ENCODE measurements at regions of chr13 and their contacts with region 1.

Region 1: GRCh38 chr13:28819735-28820098 is 422 bp upstream of the MTUS2 start:
- DNase-seq: peak in 5 of 7 donors; percentile 23 to 60 (median 46)
- H3K4me3 ChIP-seq: peak overlapping the region in 1 of 4 donors; percentile 41
- H3K27ac ChIP-seq: no peak overlapping the region
- H3K4me1 ChIP-seq: peaks cover 0 to 5% of the 10 kb centered on the region in 2 donors
- H3K27me3 ChIP-seq: peaks cover 31% of the 10 kb centered on the region
- CTCF ChIP-seq: peak in 2 of 6 experiments; percentile 14 to 43
- POLR2A ChIP-seq: no peak

Region 2: DNA sequence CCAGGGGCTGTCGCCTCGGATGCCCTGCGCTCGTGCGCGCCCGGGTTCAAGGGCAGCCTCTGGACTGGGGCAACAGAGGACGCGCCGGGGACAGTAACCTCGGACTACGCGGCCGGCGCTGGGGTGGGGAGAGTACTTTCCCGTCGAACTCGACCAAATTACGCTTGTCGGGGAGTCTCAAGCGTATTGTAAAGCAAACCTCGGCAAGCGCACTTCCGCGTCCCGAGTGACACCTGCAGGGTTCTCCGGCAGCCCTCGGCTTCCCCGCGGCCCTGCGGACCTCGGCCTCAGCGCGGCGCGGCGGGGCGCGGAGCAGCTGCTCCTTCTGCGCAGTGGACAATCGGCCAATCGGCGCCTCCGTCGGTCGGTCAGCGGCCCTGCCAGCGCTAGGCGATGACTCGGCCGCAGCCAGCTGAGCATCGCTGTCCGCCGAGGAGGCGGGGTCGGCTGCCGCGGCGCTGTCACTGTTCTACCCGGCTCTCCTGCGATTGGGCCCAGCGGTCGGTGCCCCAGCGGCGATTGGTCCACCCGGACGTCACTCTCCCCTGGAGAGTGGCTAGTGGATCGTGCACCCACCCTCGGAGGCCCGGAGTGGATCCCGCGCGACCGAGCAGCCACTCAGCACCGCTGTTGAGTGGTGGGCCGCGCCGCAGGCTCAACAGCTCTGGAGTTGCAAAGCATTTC is 101.0 kb before region 1 on chr13 and contains the start of gene SLC46A3:
- intact Hi-C with region 1: no loop called
- DNase-seq: peak; percentile 99 to 100 (median 99)
- H3K4me3 ChIP-seq: peak within 1 kb of the TSS in 3 of 4 donors; percentile 20 to 93 (median 49)
- H3K27ac ChIP-seq: peak within 1 kb of the TSS; percentile 77 to 100 (median 97)
- H3K4me1 ChIP-seq: peaks cover 7 to 28% of the 10 kb centered on the region in 2 donors
- H3K27me3 ChIP-seq: no peaks in the 10 kb centered on the region
- CTCF ChIP-seq: peak in 2 of 6 experiments; percentile 19 to 28
- POLR2A ChIP-seq: peak; percentile 79 to 90
- total RNA-seq, gene SLC46A3: 13.9 to 87.4 (median 32.9) TPM

Region 3: GRCh38 chr13:29328501-29328900 is 508.8 kb after region 1 on chr13:
- intact Hi-C with region 1: no loop called
- DNase-seq: no peak
- H3K4me3 ChIP-seq: no peak overlapping the region
- H3K27ac ChIP-seq: no peak overlapping the region
- H3K4me1 ChIP-seq: no peaks in the 10 kb centered on the region
- H3K27me3 ChIP-seq: peaks cover 3% of the 10 kb centered on the region
- CTCF ChIP-seq: no peak
- POLR2A ChIP-seq: no peak

Region 4: GRCh38 chr13:29362849-29363604 is 543.3 kb after region 1 on chr13:
- intact Hi-C with region 1: loop called in 1 of 2 experiments (anchors 10 kb)
- DNase-seq: peak; percentile 29 to 58 (median 33)
- H3K4me3 ChIP-seq: no peak overlapping the region
- H3K27ac ChIP-seq: no peak overlapping the region
- H3K4me1 ChIP-seq: no peaks in the 10 kb centered on the region
- H3K27me3 ChIP-seq: no peaks in the 10 kb centered on the region
- CTCF ChIP-seq: peak; percentile 52 to 86 (median 78)
- POLR2A ChIP-seq: no peak

Measured in adrenal gland (tissue), 19 donors.